ENCODE measurements at regions of chr12 and their contacts with region 1.

Region 1: DNA sequence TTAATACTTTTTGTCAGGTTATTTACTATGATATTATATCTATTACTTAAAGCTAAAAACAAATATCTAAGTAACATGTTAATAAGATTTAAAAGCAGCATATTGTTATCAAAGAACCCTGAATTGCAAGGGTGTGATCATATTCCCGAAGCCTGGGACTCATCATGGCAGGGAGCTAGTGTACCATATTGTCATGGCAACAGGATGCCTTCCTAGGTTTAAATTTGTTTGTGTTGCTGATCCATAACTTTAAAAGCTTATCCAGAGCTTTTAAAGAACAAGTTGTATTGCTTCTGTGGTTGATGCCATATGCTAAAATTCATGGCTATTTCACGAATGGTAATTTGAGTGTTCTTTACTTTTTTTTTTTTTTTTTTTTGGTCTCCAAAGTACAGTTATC is 500.5 kb downstream of the NAV3 start:
- DNase-seq: no peak
- H3K4me3 ChIP-seq: no peak overlapping the region
- H3K27ac ChIP-seq: no peak overlapping the region
- H3K4me1 ChIP-seq: no peaks in the 10 kb centered on the region
- H3K27me3 ChIP-seq: no peaks in the 10 kb centered on the region
- CTCF ChIP-seq: no peak

Region 2: DNA sequence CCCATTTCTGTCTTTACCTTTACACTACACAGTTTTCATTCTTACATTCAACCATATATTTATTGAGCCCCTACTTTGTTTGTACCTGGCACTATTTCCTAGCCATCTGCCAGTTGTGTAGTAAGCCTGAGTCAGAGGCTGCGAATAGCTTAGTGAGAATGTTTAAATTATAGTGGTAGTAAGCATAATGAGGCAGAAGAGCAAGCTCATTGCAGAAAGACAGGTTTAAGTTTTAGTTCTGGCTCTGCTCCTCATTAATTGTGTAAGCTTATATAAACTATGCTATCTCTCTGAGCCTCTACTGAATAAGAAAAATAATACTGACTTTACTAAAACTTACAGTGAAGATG is 377.0 kb before region 1 on chr12:
- CTCF ChIA-PET with region 1: no interaction called
- POLR2A ChIA-PET with region 1: no interaction called
- intact Hi-C with region 1: no loop called
- DNase-seq: no peak
- H3K4me3 ChIP-seq: no peak overlapping the region
- H3K27ac ChIP-seq: no peak overlapping the region
- H3K4me1 ChIP-seq: no peaks in the 10 kb centered on the region
- H3K27me3 ChIP-seq: no peaks in the 10 kb centered on the region
- CTCF ChIP-seq: no peak

Region 3: DNA sequence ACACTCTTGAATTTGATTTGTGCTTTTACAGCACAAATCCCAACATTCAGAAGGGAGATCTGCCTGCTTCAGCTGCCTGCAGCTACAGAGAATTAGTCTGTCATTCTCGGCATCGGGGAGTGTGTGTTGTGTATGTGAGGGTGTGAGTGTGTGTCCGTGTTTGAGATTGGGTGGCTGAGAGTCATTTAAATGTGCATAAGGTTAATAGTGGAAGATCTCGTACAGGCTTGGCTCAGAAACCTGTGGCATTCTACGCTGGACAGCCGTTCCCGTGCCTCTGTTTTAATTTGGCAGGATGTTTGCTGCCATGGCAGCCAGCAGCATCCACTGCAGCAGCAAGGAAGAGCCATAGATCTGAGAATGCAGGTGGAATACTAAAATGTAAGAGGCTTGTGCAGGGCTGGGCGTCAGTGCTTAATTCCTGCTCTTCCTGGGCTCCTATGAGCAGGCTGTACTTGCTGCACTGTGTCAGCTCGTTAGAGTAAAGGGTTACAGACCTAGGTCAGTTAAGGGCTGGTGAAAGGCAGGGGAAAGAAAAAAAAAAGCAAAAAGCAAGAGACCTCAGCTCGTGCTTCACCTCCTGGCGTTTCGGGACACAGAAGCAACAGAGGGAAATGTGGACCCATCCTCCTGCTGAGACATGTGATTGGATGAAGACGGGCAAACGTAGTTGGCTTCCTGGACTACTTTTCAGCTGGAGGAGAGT is 295.1 kb before region 1 on chr12:
- CTCF ChIA-PET with region 1: no interaction called
- POLR2A ChIA-PET with region 1: no interaction called
- intact Hi-C with region 1: no loop called
- DNase-seq: no peak
- H3K4me3 ChIP-seq: no peak overlapping the region
- H3K27ac ChIP-seq: no peak overlapping the region
- H3K4me1 ChIP-seq: no peaks in the 10 kb centered on the region
- H3K27me3 ChIP-seq: no peaks in the 10 kb centered on the region
- CTCF ChIP-seq: no peak

Region 4: GRCh38 chr12:78198896-78199295 is 132.3 kb before region 1 on chr12:
- CTCF ChIA-PET with region 1: no interaction called
- POLR2A ChIA-PET with region 1: interaction called, 11 read pairs
- intact Hi-C with region 1: no loop called
- DNase-seq: no peak
- H3K4me3 ChIP-seq: no peak overlapping the region
- H3K27ac ChIP-seq: no peak overlapping the region
- H3K4me1 ChIP-seq: no peaks in the 10 kb centered on the region
- H3K27me3 ChIP-seq: no peaks in the 10 kb centered on the region
- CTCF ChIP-seq: no peak

Region 5: GRCh38 chr12:78279567-78279966 is 51.6 kb before region 1 on chr12:
- CTCF ChIA-PET with region 1: no interaction called
- POLR2A ChIA-PET with region 1: no interaction called
- intact Hi-C with region 1: no loop called
- DNase-seq: no peak
- H3K4me3 ChIP-seq: no peak overlapping the region
- H3K27ac ChIP-seq: no peak overlapping the region
- H3K4me1 ChIP-seq: no peaks in the 10 kb centered on the region
- H3K27me3 ChIP-seq: no peaks in the 10 kb centered on the region
- CTCF ChIP-seq: no peak

Region 6: DNA sequence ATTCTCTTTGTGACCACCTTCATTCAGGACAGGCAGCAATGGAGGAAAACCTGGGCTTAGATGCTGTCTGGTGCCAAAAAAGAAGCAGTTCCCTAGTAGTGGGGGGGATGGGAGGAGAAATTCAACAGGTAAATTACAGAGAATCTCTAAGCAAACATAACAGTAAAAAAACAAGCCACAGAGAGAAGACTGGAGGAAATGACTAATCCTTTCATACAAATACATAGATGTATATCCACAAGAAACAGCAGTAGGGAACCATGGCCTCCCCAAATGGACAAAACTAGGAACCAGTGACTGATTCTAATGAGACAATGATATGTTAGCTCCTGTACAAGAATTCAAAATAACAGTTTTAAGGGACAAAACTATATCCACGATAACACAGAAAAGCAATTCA is 12.5 kb after region 1 on chr12:
- CTCF ChIA-PET with region 1: no interaction called
- POLR2A ChIA-PET with region 1: no interaction called
- intact Hi-C with region 1: no loop called
- DNase-seq: no peak
- H3K4me3 ChIP-seq: no peak overlapping the region
- H3K27ac ChIP-seq: no peak overlapping the region
- H3K4me1 ChIP-seq: no peaks in the 10 kb centered on the region
- H3K27me3 ChIP-seq: no peaks in the 10 kb centered on the region
- CTCF ChIP-seq: no peak